PC-3 (cell line): ENCODE measurements at regions of chr3 and their contacts with region 1.

Region 1: GRCh38 chr3:151372063-151372820 is 12.3 kb downstream of the P2RY12 start:
- DNase-seq: peak; percentile 59
- ATAC-seq: peak; percentile 65
- H3K4me3 ChIP-seq: no peak overlapping the region
- H3K27ac ChIP-seq: peak overlapping the region; percentile 15; the same call in 1 of the 2 replicates
- H3K4me1 ChIP-seq: peaks cover 12% of the 10 kb centered on the region
- H3K27me3 ChIP-seq: no peaks in the 10 kb centered on the region
- CTCF ChIP-seq: no peak

Region 2: GRCh38 chr3:151412989-151413388 is 40.7 kb after region 1 on chr3:
- CTCF ChIA-PET with region 1: no interaction called
- POLR2A ChIA-PET with region 1: no interaction called
- intact Hi-C with region 1: loop called (anchors 5 kb)
- DNase-seq: no peak
- ATAC-seq: no peak
- H3K4me3 ChIP-seq: no peak overlapping the region
- H3K27ac ChIP-seq: no peak overlapping the region
- H3K4me1 ChIP-seq: peaks cover 13% of the 10 kb centered on the region
- H3K27me3 ChIP-seq: no peaks in the 10 kb centered on the region
- CTCF ChIP-seq: peak; percentile 42